OCI-LY7 (cell line): ENCODE measurements at regions of chr22 and their contacts with region 1.

Region 1: GRCh38 chr22:22935546-22936157 is 48.0 kb downstream of the IGLL5 start:
- DNase-seq: peak; percentile 99
- H3K4me3 ChIP-seq: peak overlapping the region; percentile 14
- H3K27ac ChIP-seq: peak overlapping the region; percentile 91
- H3K4me1 ChIP-seq: peaks cover 98% of the 10 kb centered on the region
- CTCF ChIP-seq: peak; percentile 82

Region 2: DNA sequence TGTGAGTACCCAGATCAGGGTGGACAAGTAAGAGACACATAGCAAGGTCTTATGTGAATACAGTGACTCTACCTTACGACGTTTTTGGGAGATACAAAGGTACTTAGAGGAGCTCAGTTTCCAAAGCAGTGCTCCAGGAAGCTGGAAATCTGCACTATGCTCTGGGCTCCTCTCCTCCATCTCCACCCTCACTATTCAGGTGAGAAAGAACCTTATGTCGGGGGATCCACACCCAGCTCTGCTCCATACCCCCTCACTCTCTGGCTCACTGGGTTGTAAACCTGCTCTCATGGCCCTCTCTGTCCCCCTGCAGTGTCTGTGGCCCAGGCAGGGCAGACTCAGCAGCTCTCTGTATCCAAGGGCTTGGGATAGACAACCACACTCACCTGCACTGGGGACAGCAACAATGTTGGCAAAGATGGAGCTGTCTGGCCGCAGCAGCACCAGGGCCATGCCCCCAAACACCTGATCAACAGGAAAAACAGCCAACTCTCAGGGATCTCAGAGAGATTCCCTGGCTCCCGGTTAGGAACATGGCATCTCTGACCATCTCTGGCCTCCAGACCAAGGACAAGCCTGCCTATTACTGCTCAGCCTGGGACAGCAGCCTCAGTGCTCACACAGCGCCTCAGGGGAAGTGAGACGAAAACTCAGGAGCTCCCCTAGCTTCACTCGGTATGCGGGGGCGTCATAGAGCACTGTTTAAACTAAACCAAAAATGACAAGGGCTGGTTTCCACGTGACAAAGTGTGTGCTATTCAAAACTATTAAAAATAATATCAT is 892.2 kb before region 1 on chr22:
- CTCF ChIA-PET with region 1: no interaction called
- POLR2A ChIA-PET with region 1: no interaction called
- intact Hi-C with region 1: loop called (anchors 10 kb)
- DNase-seq: peak; percentile 81
- H3K4me3 ChIP-seq: peak overlapping the region; percentile 70
- H3K27ac ChIP-seq: peak overlapping the region; percentile 84
- H3K4me1 ChIP-seq: peaks cover 96% of the 10 kb centered on the region
- CTCF ChIP-seq: peak; percentile 70

Region 3: GRCh38 chr22:22593964-22594656 is 341.5 kb before region 1 on chr22:
- CTCF ChIA-PET with region 1: no interaction called
- POLR2A ChIA-PET with region 1: no interaction called
- intact Hi-C with region 1: no loop called
- DNase-seq: peak; percentile 84
- H3K4me3 ChIP-seq: no peak overlapping the region
- H3K27ac ChIP-seq: no peak overlapping the region
- H3K4me1 ChIP-seq: peaks cover 14% of the 10 kb centered on the region
- CTCF ChIP-seq: peak; percentile 96

Region 4: GRCh38 chr22:22779213-22779612 is 156.4 kb before region 1 on chr22:
- CTCF ChIA-PET with region 1: no interaction called
- POLR2A ChIA-PET with region 1: no interaction called
- intact Hi-C with region 1: no loop called
- DNase-seq: no peak
- H3K4me3 ChIP-seq: no peak overlapping the region
- H3K27ac ChIP-seq: no peak overlapping the region
- H3K4me1 ChIP-seq: peaks cover 13% of the 10 kb centered on the region
- CTCF ChIP-seq: no peak

Region 5: GRCh38 chr22:22836635-22837034 is 99.0 kb before region 1 on chr22:
- CTCF ChIA-PET with region 1: no interaction called
- POLR2A ChIA-PET with region 1: no interaction called
- intact Hi-C with region 1: no loop called
- DNase-seq: no peak
- H3K4me3 ChIP-seq: no peak overlapping the region
- H3K27ac ChIP-seq: no peak overlapping the region
- H3K4me1 ChIP-seq: peaks cover 23% of the 10 kb centered on the region
- CTCF ChIP-seq: no peak

Region 6: DNA sequence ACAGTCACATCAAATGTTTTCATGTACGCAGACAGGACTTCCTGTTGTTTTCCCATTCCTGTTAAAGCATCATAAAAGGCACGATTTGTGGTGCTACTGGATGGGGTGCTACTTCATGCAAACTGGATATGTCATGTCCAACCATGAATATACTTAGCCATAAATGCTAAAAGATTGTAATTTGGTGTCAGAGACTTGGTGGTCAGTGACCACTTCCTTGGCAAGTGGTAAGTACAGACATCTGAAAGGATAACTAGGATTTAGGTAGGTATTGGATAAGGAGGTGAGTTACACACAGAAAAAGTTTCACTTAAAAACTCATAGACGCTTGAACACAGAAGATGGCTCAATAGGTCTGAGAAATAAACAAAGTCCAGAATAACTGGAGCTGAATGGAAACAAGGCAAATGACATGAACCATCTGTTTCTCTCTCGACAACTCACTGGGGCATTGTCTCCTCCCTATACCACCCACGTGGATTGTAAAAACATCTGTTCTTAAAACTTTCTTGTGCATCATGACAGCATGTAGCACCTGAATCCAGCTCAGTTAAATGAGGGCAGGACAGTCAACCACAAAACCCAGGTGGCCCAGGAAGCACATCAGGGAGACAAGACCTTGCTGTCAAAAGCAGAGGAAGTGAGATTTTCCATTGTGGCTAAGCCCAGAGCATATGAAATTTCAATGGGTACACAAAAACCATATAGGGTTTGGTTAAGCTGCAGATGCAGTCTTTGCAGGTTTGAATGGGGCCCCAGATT is 70.2 kb before region 1 on chr22:
- CTCF ChIA-PET with region 1: interaction called, 4 read pairs
- POLR2A ChIA-PET with region 1: interaction called, 6 read pairs
- intact Hi-C with region 1: loop called (anchors 1 kb)
- DNase-seq: peak; percentile 99
- H3K4me3 ChIP-seq: peak overlapping the region; percentile 32
- H3K27ac ChIP-seq: peak overlapping the region; percentile 92
- H3K4me1 ChIP-seq: peaks cover 92% of the 10 kb centered on the region
- CTCF ChIP-seq: no peak

Region 7: GRCh38 chr22:22893077-22893805 is 42.4 kb before region 1 on chr22:
- CTCF ChIA-PET with region 1: interaction called, 6 read pairs
- POLR2A ChIA-PET with region 1: interaction called, 308 read pairs
- intact Hi-C with region 1: loop called (anchors 1 kb)
- DNase-seq: peak; percentile 57
- H3K4me3 ChIP-seq: peak overlapping the region; percentile 87
- H3K27ac ChIP-seq: peak overlapping the region; percentile 81
- H3K4me1 ChIP-seq: peaks cover 66% of the 10 kb centered on the region
- CTCF ChIP-seq: no peak

Region 8: GRCh38 chr22:23750714-23751440 is 815.2 kb after region 1 on chr22 and contains the start of gene ZNF70:
- CTCF ChIA-PET with region 1: no interaction called
- POLR2A ChIA-PET with region 1: no interaction called
- intact Hi-C with region 1: loop called (anchors 10 kb)
- DNase-seq: peak; percentile 94
- H3K4me3 ChIP-seq: peak within 1 kb of the TSS; percentile 78
- H3K27ac ChIP-seq: peak within 1 kb of the TSS; percentile 95
- H3K4me1 ChIP-seq: peaks cover 40% of the 10 kb centered on the region
- CTCF ChIP-seq: peak; percentile 50
- total RNA-seq, gene ZNF70: 5.1 and 6.0 TPM in 2 replicates